Left ventricle myocardium inferior (tissue), 1 donor: ENCODE measurements at regions of chr13 and their contacts with region 1.

Region 1: GRCh38 chr13:75870397-75870903 is 234.3 kb downstream of the LMO7 start:
- DNase-seq: no peak
- H3K4me3 ChIP-seq: peak overlapping the region; percentile 57
- H3K27ac ChIP-seq: no peak overlapping the region
- H3K4me1 ChIP-seq: no peaks in the 10 kb centered on the region
- H3K27me3 ChIP-seq: no peaks in the 10 kb centered on the region
- CTCF ChIP-seq: peak; percentile 82

Region 2: GRCh38 chr13:76473552-76474134 is 603.2 kb after region 1 on chr13:
- intact Hi-C with region 1: loop called (anchors 2 kb)
- DNase-seq: peak; percentile 45
- H3K4me3 ChIP-seq: no peak overlapping the region
- H3K27ac ChIP-seq: peak overlapping the region; percentile 44
- H3K4me1 ChIP-seq: peaks cover 11% of the 10 kb centered on the region
- H3K27me3 ChIP-seq: no peaks in the 10 kb centered on the region
- CTCF ChIP-seq: peak; percentile 88

Region 3: DNA sequence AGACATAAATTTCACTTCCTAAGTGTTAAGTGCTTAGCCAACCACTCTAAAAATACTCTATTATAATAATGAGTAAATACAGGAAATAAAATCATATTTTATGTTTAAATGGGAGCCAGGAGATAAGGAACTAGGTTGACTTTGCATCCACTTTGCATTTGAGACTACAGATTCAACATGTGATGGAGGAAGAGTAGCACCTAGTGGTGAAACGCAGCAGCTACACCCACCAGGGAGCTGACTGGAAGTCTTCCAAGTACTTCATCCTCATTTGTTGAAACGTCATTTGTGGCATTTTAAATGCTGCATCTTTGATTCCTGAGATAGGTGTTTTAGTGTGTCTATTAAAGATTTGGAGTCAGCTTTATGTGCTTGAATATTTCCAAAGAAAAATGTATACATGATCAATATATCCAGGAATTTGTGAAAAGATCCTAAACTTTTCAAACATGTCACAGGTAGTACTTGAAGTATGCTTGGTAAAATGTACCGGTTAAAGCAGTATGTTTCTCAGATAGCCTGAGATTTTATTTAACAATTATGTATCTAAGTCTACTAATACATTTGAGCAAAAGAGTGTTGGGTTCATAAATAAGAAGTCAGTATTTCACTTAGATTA is 1033.2 kb after region 1 on chr13:
- intact Hi-C with region 1: loop called (anchors 5 kb)
- DNase-seq: peak; percentile 33
- H3K4me3 ChIP-seq: no peak overlapping the region
- H3K27ac ChIP-seq: no peak overlapping the region
- H3K4me1 ChIP-seq: no peaks in the 10 kb centered on the region
- H3K27me3 ChIP-seq: no peaks in the 10 kb centered on the region
- CTCF ChIP-seq: peak; percentile 100